ENCODE measurements at regions of chr3 and their contacts with region 1.

Region 1: DNA sequence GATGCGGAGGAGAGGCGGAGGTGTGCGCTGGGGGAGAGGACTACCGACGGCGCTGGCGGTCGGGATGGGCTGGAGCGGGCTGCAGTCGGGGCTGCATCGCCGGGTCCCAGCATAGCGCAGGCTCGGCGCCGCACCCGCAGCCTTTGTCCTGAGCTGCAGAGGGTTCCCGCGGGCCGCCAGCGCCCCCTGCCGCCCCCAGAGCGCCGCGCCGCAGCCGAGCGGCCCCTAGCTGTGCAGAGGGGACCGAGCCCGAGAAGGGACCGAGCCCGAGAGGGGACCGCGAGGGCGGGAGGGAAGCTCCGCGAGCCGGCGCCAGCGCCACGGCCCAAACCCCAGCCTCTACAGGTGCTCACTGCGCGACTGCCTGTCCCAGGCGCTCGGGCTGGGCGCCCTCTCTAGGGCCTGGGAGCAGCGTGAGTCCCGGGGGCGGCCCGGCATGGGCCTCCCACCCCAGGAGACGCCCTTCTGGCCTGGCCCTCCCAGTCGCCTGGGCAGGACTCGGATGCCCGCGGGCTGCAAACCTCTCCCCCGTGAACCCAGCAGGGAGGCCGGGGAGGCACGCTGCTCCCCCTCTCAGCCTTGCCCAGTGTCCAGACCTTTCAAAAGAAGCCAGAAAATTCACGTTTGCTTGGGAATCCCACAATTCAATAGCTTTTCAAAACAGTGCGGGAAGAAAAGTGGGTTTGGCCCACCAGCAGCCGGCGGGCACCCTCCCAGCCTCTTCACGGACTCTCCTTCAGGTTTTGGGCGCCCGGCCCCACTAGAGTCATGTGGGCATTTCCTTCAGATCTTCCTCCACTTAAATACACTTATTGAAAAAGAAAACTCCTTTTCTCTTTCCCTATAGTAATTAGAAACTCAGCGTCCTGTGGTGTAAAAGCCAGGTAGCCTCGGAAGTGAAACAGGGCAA is 134.7 kb downstream of the TPRA1 start:
- DNase-seq: no peak
- H3K4me3 ChIP-seq: peak overlapping the region; percentile 16 to 23
- H3K27ac ChIP-seq: no peak overlapping the region
- H3K4me1 ChIP-seq: peaks cover 26% of the 10 kb centered on the region
- H3K27me3 ChIP-seq: peaks cover 11% of the 10 kb centered on the region
- CTCF ChIP-seq: peak; percentile 60 to 95 (median 78)
- POLR2A ChIP-seq: no peak

Region 2: DNA sequence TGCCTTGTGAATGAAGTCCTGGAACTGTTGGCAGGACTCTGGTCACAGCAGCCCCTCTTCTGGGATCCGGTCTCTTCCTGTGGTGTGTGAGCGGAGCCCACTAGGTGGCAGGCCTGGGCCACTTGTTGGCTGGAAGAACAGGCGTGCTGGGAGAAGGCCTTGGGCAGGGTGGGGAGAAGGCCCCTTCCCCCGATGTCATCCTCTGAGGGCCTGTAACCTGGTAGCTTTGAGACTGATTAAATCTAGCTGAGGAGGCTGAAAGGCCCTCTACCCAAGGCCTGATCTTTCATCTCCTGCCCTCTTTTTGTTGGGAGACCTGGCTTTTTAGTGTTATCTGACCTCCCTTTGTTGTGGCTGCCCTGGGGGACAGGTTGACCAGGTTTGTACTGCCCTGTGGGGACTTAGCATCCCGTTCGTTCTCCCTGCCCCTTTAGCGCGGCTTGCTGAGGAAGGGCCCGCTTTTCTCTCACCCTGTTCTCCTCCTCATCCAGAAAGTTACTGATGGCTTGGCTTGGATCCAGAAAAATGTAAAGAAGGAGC is 703.4 kb before region 1 on chr3:
- intact Hi-C with region 1: loop called (anchors 10 kb)
- DNase-seq: peak; percentile 87 to 94
- H3K4me3 ChIP-seq: no peak overlapping the region
- H3K27ac ChIP-seq: no peak overlapping the region
- H3K4me1 ChIP-seq: peaks cover 12% of the 10 kb centered on the region
- H3K27me3 ChIP-seq: no peaks in the 10 kb centered on the region
- CTCF ChIP-seq: peak; percentile 65 to 90 (median 90)
- POLR2A ChIP-seq: no peak

Region 3: DNA sequence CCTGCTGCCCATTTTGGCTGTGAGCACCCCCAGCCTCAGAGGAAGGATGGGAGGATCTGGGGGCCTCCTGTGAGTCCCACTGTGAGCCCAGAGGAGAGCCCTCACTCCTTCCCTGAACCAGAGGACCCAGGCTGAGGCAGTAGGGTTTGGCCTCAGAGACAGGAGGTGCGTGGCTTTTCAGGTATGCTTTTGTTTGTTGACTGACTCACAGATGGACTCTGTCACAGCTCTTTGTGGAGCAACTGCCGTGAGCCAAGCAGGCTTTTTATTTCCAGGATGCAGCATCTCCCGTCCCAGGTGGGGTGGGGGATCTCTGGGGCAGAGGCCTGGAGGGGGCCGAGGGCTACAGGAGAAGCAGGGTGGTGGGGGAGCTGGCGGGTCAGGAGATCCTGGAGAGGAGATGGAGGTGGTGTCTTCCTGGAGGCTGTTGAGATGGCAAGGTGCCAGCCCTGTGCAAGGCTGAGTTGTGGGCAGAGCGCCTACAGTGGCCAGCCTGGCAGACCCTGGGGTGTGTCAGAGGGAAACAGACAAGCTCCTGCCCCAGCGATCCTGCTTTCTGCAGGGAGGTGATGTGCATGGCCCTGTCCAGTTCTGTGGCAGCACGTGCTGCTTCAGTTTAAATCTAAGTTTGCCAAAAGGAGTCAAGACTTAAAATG is 448.9 kb before region 1 on chr3:
- intact Hi-C with region 1: loop called (anchors 5 kb)
- DNase-seq: no peak
- H3K4me3 ChIP-seq: no peak overlapping the region
- H3K27ac ChIP-seq: no peak overlapping the region
- H3K4me1 ChIP-seq: peaks cover 25% of the 10 kb centered on the region
- H3K27me3 ChIP-seq: no peaks in the 10 kb centered on the region
- CTCF ChIP-seq: no peak
- POLR2A ChIP-seq: no peak

Region 4: DNA sequence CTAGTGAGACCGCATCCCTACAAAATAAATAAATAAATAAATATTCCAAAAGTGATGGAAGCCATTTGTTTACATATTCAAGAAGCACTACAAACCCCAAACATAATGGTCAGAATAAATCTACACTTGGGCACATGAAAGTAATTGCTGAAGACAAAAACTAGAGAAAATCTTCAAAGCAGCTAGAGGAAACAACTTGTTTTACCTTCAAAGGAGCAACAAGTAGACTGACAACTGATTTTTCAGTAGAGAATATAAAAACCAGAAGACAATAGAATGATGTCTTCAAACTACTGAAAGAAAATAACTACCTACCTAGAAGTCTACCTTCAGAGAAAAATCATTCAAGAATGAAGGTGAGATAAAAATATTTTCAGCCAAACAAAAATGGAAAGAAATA is 45.4 kb after region 1 on chr3:
- intact Hi-C with region 1: no loop called
- DNase-seq: no peak
- H3K4me3 ChIP-seq: no peak overlapping the region
- H3K27ac ChIP-seq: no peak overlapping the region
- H3K4me1 ChIP-seq: no peaks in the 10 kb centered on the region
- H3K27me3 ChIP-seq: no peaks in the 10 kb centered on the region
- CTCF ChIP-seq: no peak
- POLR2A ChIP-seq: no peak

Region 5: GRCh38 chr3:127822698-127823425 is 367.1 kb after region 1 on chr3:
- intact Hi-C with region 1: no loop called
- DNase-seq: peak in 1 of 2 donors; percentile 95
- H3K4me3 ChIP-seq: peak overlapping the region; percentile 81 to 89
- H3K27ac ChIP-seq: peak overlapping the region; percentile 85
- H3K4me1 ChIP-seq: peaks cover 45% of the 10 kb centered on the region
- H3K27me3 ChIP-seq: no peaks in the 10 kb centered on the region
- CTCF ChIP-seq: peak in 1 of 3 experiments; percentile 33
- POLR2A ChIP-seq: no peak